HEK293 (cell line): ENCODE measurements at regions of chr20 and their contacts with region 1.

Region 1: GRCh38 chr20:3051385-3052019 is 5.7 kb downstream of the MRPS26 start:
- H3K4me3 ChIP-seq: no peak overlapping the region
- H3K27ac ChIP-seq: no peak overlapping the region
- H3K4me1 ChIP-seq: peaks cover 5% of the 10 kb centered on the region
- CTCF ChIP-seq: no peak

Region 2: DNA sequence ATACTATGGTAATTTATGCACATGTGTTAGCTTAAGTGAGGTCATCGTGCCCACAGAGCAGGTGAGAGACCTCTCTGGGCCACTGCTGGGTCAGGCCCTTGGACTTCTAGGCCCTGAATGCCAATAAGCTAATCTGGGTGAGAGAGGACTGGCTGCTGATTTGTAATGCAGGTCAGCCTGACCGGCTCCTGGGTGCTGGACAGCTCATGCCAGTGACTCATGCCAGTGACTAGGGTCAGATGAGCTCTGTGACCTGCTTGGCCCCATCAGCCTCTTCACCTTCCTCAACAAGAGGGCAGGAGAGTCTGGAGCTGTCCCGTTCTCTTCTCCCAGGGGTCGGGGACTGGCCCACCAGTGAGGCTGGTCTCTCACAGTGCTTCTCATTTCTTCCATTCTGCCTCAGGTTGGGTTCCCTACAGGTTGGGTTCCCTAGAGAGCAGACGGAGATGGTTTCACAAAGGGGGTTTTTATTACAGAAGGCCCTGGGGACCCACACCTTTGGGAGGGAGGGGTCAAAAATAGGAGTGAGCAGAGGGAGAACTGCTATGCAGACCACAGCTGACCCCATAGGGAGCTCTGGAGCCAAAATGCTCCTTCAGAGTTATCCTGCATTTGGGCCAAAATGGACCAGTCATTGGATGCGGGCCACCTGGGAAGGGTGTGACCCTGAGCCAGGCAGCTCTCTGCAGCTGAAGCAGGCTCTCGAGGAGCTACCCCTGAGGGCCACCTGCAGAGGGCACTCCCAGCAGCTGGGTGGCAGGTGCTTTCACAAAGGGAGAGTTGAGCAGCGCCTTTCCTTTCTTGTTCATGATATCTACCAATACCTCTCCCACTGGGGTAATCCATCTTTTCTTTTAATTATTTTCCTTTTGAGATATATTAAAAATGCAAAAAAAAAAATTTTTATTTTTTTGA is 17.7 kb after region 1 on chr20:
- CTCF ChIA-PET with region 1: interaction called, 11 read pairs
- POLR2A ChIA-PET with region 1: interaction called, 4 read pairs
- H3K4me3 ChIP-seq: no peak overlapping the region
- H3K27ac ChIP-seq: no peak overlapping the region
- H3K4me1 ChIP-seq: no peaks in the 10 kb centered on the region
- CTCF ChIP-seq: no peak

Region 3: GRCh38 chr20:3115190-3116107 is 63.9 kb after region 1 on chr20:
- CTCF ChIA-PET with region 1: interaction called, 14 read pairs
- POLR2A ChIA-PET with region 1: interaction called, 4 read pairs
- H3K4me3 ChIP-seq: no peak overlapping the region
- H3K27ac ChIP-seq: no peak overlapping the region
- H3K4me1 ChIP-seq: no peaks in the 10 kb centered on the region; the same call in 1 of the 2 replicates
- CTCF ChIP-seq: peak; percentile 71; the same call in 1 of the 2 replicates

Region 4: GRCh38 chr20:3276680-3277015 is 225.1 kb after region 1 on chr20:
- CTCF ChIA-PET with region 1: interaction called, 21 read pairs
- POLR2A ChIA-PET with region 1: no interaction called
- H3K4me3 ChIP-seq: no peak overlapping the region
- H3K27ac ChIP-seq: no peak overlapping the region
- H3K4me1 ChIP-seq: no peaks in the 10 kb centered on the region
- CTCF ChIP-seq: peak; percentile 44; the same call in 1 of the 2 replicates

Region 5: DNA sequence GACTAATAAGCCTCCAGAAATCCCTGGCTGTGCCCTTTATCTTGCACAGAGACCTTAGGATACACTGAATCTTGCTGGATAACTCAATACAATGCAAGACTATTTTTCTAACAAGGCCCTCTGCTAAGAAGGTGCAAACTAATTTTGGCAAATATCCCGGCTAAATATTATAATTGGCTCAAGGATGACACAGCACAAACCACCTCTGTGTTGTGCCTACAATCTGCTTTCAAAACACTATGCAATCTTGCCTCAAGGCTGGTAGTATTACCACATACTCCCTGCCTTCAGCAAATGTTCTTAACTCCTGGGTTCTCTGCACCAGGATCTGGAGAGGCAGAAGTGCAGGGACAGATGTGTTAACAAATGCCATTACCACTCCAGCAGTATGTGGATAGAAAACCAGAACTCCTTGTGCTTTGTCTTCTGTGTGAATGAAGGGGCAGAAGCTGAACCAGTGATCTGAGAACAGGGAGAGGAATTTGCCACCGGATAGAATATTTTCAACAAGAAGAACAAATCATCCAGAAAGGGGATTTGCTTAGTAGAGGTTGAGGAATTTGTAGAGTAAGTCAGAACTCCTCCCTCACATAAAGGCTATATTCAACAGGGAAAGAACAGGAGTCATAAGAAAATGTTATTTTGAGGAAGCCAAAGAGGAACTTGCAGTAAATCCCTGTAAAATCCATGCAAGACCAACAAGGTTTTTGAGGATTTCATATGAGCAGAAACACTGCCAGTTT is 261.6 kb after region 1 on chr20:
- CTCF ChIA-PET with region 1: interaction called, 32 read pairs
- POLR2A ChIA-PET with region 1: no interaction called
- H3K4me3 ChIP-seq: no peak overlapping the region
- H3K27ac ChIP-seq: no peak overlapping the region
- H3K4me1 ChIP-seq: peaks cover 3% of the 10 kb centered on the region; the same call in 1 of the 2 replicates
- CTCF ChIP-seq: no peak